GM12878 (cell line): ENCODE measurements at regions of chr1 and their contacts with region 1.

Region 1: GRCh38 chr1:114979278-114979891 is 50.2 kb upstream of the TSHB start:
- DNase-seq: peak; percentile 13
- ATAC-seq: peak; percentile 72
- H3K4me3 ChIP-seq: no peak overlapping the region
- H3K27ac ChIP-seq: no peak overlapping the region
- H3K4me1 ChIP-seq: no peaks in the 10 kb centered on the region
- H3K27me3 ChIP-seq: no peaks in the 10 kb centered on the region
- CTCF ChIP-seq: peak; percentile 60 to 70 (median 65); a peak in 5 of 6 replicates
- EP300 ChIP-seq: no peak
- POLR2A ChIP-seq: no peak
- RAD21 ChIP-seq: peak; percentile 73

Region 2: DNA sequence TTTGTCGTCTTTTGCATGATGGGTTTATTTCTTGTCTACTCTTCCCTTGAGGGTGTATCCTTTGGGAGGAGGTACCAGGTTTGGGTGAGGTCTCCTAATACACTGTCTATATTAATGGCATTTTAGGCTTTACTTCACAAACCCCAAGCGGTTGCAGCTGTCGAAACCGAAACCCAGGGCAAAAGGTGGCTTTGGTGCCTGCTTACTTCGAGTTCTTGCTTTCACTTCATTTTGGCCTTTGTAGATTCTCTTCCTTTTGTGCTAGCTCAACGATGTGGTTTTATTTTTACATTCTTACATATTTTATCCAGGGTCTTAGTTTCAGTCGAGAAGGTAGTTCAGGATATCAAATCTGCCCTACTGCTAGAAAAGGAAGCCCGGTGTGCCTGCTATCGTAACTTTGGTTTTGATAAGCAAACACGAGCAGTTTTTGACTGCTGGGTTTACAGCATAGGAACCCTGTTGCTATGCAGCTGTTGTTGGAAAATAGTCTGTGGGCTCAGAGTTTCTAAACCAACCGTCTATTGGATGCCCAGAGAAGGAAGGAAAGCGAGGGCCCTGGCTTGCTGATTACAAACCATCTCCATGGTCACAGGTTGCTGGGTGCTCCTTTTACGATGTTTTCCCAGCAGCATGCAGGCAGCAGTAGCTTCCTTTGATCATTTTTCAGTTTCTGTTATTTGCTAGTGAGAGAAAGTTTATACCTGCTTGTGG is 119.8 kb after region 1 on chr1:
- CTCF ChIA-PET with region 1: interaction called, 13 read pairs
- POLR2A ChIA-PET with region 1: no interaction called
- RAD21 ChIA-PET with region 1: interaction called, 4 read pairs
- SMC1A ChIA-PET with region 1: interaction called, 5 read pairs
- in situ Hi-C with region 1: no loop called
- intact Hi-C with region 1: no loop called
- DNase-seq: peak; percentile 37
- ATAC-seq: peak; percentile 93
- H3K4me3 ChIP-seq: peak overlapping the region; percentile 62; the same call in 1 of the 2 replicates
- H3K27ac ChIP-seq: no peak overlapping the region
- H3K4me1 ChIP-seq: peaks cover 7% of the 10 kb centered on the region
- H3K27me3 ChIP-seq: no peaks in the 10 kb centered on the region
- CTCF ChIP-seq: no peak
- EP300 ChIP-seq: peak in 1 of 2 experiments; percentile 32; a peak in 2 of 4 replicates
- POLR2A ChIP-seq: no peak
- RAD21 ChIP-seq: no peak

Region 3: GRCh38 chr1:115275212-115275611 is 295.8 kb after region 1 on chr1:
- CTCF ChIA-PET with region 1: no interaction called
- POLR2A ChIA-PET with region 1: no interaction called
- RAD21 ChIA-PET with region 1: no interaction called
- SMC1A ChIA-PET with region 1: no interaction called
- in situ Hi-C with region 1: no loop called
- intact Hi-C with region 1: no loop called
- DNase-seq: no peak
- ATAC-seq: 0 out of 3 replicates have a peak, but pooled peaks have one; percentile 36
- H3K4me3 ChIP-seq: no peak overlapping the region
- H3K27ac ChIP-seq: no peak overlapping the region
- H3K4me1 ChIP-seq: no peaks in the 10 kb centered on the region
- H3K27me3 ChIP-seq: 0 out of 4 replicates have a peak, but pooled peaks cover 0 to 2% of the 10 kb centered on the region in 2 experiments
- CTCF ChIP-seq: peak; percentile 39 to 68 (median 60); a peak in 5 of 6 replicates
- EP300 ChIP-seq: no peak
- POLR2A ChIP-seq: no peak
- RAD21 ChIP-seq: peak; percentile 45